Activated CD8-positive, alpha-beta T cell treated with anti-CD3 and anti-CD28 coated beads, Interleukin-2, amount 10 ng/mL, durations not matched to agents 7 days and 5 days (primary cell): ENCODE measurements at regions of chr9 and their contacts with region 1.

Region 1: DNA sequence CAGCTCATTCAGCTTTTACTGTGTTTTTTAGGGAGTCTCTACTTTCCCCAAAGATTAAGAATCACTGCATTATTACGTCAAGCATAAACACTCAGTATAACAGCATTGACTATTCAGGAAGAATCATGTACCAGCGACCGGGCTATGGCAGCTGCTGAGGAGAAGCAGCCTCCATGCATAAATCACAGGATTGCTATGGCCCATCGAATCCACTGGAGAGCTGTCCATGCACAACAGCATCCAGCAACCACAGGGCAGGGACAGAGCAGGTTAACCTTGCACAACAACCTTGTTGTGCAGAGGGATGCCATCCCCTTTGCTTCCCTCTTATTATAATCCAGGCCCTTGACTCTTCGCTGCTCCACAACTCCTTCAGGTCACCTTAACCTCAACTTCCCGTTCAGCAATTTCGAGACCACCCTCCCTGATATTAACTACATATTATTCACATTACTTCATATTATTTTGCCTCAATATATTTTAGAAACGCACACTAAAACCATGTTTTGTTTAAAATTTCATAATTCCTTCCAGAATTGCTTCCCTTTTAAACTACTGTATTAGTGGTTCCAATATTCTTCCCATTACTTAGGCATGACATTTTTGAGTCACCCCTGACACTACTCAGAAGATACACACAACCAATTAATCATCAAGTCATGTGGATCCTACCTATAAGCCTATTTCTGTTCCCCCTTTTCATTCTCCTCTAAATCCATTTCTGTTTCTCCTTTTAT is 991 bp downstream of the IARS1 start:
- DNase-seq: no peak
- ATAC-seq: no peak
- H3K4me3 Mint-ChIP-seq: peak overlapping the region; percentile 95
- H3K27ac Mint-ChIP-seq: peak overlapping the region; percentile 82
- H3K4me1 Mint-ChIP-seq: peaks cover 63% of the 10 kb centered on the region
- H3K27me3 Mint-ChIP-seq: no peaks in the 10 kb centered on the region

Region 2: GRCh38 chr9:92276331-92277032 is 16.0 kb before region 1 on chr9:
- CTCF ChIA-PET with region 1: interaction called, 14 read pairs
- POLR2A ChIA-PET with region 1: interaction called, 4 read pairs
- DNase-seq: peak; percentile 37
- ATAC-seq: peak; percentile 55
- H3K4me3 Mint-ChIP-seq: peak overlapping the region; percentile 32
- H3K27ac Mint-ChIP-seq: peak overlapping the region; percentile 86
- H3K4me1 Mint-ChIP-seq: peaks cover 42% of the 10 kb centered on the region
- H3K27me3 Mint-ChIP-seq: no peaks in the 10 kb centered on the region

Region 3: DNA sequence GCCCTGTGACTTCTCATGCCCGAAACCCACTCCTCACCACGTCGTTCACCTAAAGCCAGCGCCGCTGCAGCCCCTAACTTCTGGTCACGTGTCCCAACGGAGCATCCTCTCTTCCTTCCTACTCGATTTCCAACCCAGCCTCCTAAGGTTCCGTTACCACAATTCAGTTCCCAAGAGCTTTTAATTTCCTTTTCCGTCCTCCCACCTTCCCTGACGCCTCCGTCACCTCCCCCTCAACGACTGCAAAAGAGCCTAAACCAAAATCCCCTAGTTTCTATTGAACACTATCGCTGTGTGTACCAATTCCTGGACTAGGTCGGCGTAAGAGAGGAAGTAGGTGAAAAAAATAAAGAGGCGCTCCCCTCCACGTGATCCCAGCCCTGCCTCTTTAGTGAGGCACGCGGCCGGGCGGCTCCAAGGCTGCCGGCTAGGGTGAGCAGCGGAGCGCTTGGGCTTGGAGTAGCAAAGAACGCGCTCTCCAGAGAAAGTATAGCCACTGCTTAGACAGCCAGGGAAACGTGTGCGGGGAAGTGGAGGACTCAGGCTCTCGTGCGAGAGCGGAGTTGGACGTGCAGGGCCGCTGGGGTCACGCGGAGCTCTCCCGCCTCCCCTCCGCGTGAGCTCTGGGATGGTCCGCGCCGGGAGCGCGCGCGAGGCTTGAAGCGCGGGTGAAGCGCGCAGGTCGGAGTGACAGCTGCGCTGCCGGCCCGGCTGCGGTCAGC is 32.9 kb after region 1 on chr9 and contains the starts of genes CENPP and NOL8:
- CTCF ChIA-PET with region 1: interaction called, 11 read pairs
- POLR2A ChIA-PET with region 1: interaction called, 4 read pairs
- DNase-seq: peak; percentile 90
- ATAC-seq: peak; percentile 95
- H3K4me3 Mint-ChIP-seq: peak within 1 kb of the TSS; percentile 96
- H3K27ac Mint-ChIP-seq: peak within 1 kb of the TSS; percentile 97
- H3K4me1 Mint-ChIP-seq: peaks cover 42% of the 10 kb centered on the region
- H3K27me3 Mint-ChIP-seq: no peaks in the 10 kb centered on the region
- total RNA-seq, gene CENPP: 26.4 to 29.1 TPM
- total RNA-seq, gene NOL8: 51.7 to 55.3 TPM